ENCODE measurements at regions of chr22 and their contacts with region 1.

Region 1: GRCh38 chr22:46116491-46116958 is 33.8 kb upstream of the PPARA start:
- DNase-seq: peak; percentile 95
- H3K4me3 ChIP-seq: no peak overlapping the region
- H3K27ac ChIP-seq: peak overlapping the region; percentile 70 to 83 (median 77)
- H3K4me1 ChIP-seq: peaks cover 11 to 15% (median 12%) of the 10 kb centered on the region in 4 donors
- H3K27me3 ChIP-seq: no peaks in the 10 kb centered on the region
- CTCF ChIP-seq: peak; percentile 83 to 99 (median 90)
- EP300 ChIP-seq: no peak
- POLR2A ChIP-seq: no peak

Region 2: DNA sequence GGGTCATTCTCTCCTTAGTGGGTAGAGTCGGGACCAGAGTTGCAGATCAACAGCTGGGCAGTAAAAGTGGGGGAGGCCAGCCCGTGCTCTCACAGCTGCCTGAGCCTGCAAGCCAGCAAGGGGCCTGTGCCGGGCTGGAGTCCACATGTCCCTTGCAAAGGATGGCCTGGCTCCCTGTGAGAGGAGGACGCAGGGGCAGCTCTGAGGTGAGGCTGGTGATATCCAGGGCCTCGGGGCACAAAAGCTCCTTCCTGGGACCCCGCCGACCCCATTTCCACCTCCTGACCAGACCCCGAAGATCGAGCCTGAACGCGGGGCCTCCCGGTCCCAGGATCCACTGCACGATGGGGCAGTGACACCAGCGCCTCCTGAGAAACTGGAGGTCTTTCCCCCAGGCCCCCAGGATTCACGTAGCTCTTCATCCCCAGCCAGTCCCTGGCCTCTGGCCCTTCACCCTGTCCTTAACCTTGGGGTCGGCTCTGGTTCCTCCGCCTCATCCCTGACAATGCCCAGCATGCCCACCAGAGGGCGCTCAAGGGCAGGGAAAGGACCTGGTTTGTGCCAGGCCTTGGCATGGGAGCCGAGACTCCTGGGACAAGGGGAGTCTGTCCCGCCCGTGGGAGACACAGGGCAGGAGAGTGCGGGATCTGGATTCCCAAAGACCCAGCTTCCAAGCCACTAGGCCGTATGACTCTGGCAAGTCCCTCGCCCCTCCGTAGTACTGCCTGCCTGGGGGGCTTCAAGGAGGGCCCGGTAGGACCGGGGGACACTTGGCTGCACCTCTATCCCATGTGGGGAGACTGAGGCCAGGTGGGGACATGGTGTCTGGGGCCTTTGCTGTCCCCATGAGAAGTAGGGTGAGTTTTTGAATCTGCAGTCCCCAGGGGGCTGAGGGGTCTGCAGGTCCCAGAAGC is 121.8 kb before region 1 on chr22:
- in situ Hi-C with region 1: loop called in 1 of 4 experiments (anchors 5 kb)
- intact Hi-C with region 1: no loop called
- DNase-seq: peak; percentile 83
- H3K4me3 ChIP-seq: no peak overlapping the region
- H3K27ac ChIP-seq: no peak overlapping the region
- H3K4me1 ChIP-seq: peaks cover 16 to 49% (median 34%) of the 10 kb centered on the region in 4 donors
- H3K27me3 ChIP-seq: no peaks in the 10 kb centered on the region
- CTCF ChIP-seq: peak; percentile 96 to 99 (median 98)
- EP300 ChIP-seq: no peak
- POLR2A ChIP-seq: no peak

Region 3: GRCh38 chr22:46006379-46007002 is 110.0 kb before region 1 on chr22:
- in situ Hi-C with region 1: loop called in 3 of 4 experiments (anchors 5 to 10 kb)
- intact Hi-C with region 1: loop called (anchors 2 kb)
- DNase-seq: peak; percentile 92
- H3K4me3 ChIP-seq: peak overlapping the region in 1 of 4 donors; percentile 11
- H3K27ac ChIP-seq: peak overlapping the region; percentile 83 to 92 (median 88)
- H3K4me1 ChIP-seq: peaks cover 19 to 34% (median 24%) of the 10 kb centered on the region in 4 donors
- H3K27me3 ChIP-seq: no peaks in the 10 kb centered on the region
- CTCF ChIP-seq: peak; percentile 97 to 99 (median 98)
- EP300 ChIP-seq: no peak
- POLR2A ChIP-seq: no peak

Region 4: GRCh38 chr22:46267431-46268279 is 151.1 kb after region 1 on chr22 and contains the start of gene TTC38:
- in situ Hi-C with region 1: no loop called
- intact Hi-C with region 1: no loop called
- DNase-seq: peak; percentile 94
- H3K4me3 ChIP-seq: peak within 1 kb of the TSS; percentile 74 to 87 (median 82)
- H3K27ac ChIP-seq: peak within 1 kb of the TSS; percentile 88 to 93 (median 90)
- H3K4me1 ChIP-seq: peaks cover 9 to 52% (median 33%) of the 10 kb centered on the region in 4 donors
- H3K27me3 ChIP-seq: no peaks in the 10 kb centered on the region
- CTCF ChIP-seq: no peak
- EP300 ChIP-seq: no peak
- POLR2A ChIP-seq: peak; percentile 83
- total RNA-seq, gene TTC38: 167 to 316 (median 292) TPM

Measured in transverse colon (tissue), 4 donors.